OCI-LY7 (cell line): ENCODE measurements at regions of chr11 and their contacts with region 1.

Region 1: GRCh38 chr11:60455531-60456042 is at the start of gene MS4A1:
- DNase-seq: peak; percentile 100
- H3K4me3 ChIP-seq: peak within 1 kb of the TSS; percentile 84
- H3K27ac ChIP-seq: peak within 1 kb of the TSS; percentile 100
- H3K4me1 ChIP-seq: peaks cover 49% of the 10 kb centered on the region
- CTCF ChIP-seq: no peak
- total RNA-seq, gene MS4A1: 435 and 488 TPM in 2 replicates

Region 2: GRCh38 chr11:60251485-60252212 is 203.9 kb before region 1 on chr11:
- CTCF ChIA-PET with region 1: no interaction called
- POLR2A ChIA-PET with region 1: no interaction called
- intact Hi-C with region 1: no loop called
- DNase-seq: no peak
- H3K4me3 ChIP-seq: no peak overlapping the region
- H3K27ac ChIP-seq: no peak overlapping the region
- H3K4me1 ChIP-seq: no peaks in the 10 kb centered on the region
- CTCF ChIP-seq: peak; percentile 39; the same call in 1 of the 2 replicates

Region 3: GRCh38 chr11:60363542-60364510 is 91.8 kb before region 1 on chr11:
- CTCF ChIA-PET with region 1: interaction called, 26 read pairs
- POLR2A ChIA-PET with region 1: interaction called, 30 read pairs
- intact Hi-C with region 1: loop called (anchors 1 kb)
- DNase-seq: peak; percentile 91
- H3K4me3 ChIP-seq: peak overlapping the region; percentile 25
- H3K27ac ChIP-seq: peak overlapping the region; percentile 43
- H3K4me1 ChIP-seq: peaks cover 51% of the 10 kb centered on the region
- CTCF ChIP-seq: peak; percentile 96

Region 4: GRCh38 chr11:60378354-60378753 is 77.2 kb before region 1 on chr11 and contains the start of gene MS4A7:
- CTCF ChIA-PET with region 1: no interaction called
- POLR2A ChIA-PET with region 1: interaction called, 12 read pairs
- intact Hi-C with region 1: loop called (anchors 1 kb)
- DNase-seq: peak; percentile 89
- H3K4me3 ChIP-seq: peak within 1 kb of the TSS; percentile 52
- H3K27ac ChIP-seq: peak within 1 kb of the TSS; percentile 77
- H3K4me1 ChIP-seq: peaks cover 34% of the 10 kb centered on the region
- CTCF ChIP-seq: no peak
- total RNA-seq, gene MS4A7: 0.26 and 0.54 TPM in 2 replicates

Region 5: DNA sequence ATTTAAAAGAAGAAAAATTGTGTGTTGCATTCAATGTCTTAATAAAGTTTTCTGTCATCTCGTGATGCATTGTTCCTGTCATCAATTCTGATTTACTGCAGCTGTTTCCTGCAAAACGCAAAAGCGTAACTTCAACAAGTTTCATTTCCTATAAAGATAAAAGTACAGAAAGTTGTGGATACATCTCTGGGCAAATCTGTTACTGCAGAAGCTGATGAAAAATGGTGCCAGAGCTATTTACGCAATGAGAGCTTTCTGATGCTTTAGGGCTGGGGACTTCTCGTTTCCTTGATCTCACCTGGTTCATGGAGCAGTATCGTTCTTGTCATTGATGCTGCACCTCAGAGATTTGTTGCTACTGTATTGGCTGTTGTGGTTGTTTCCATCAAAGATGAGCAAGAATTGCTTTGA is 21.5 kb after region 1 on chr11:
- CTCF ChIA-PET with region 1: interaction called, 8 read pairs
- POLR2A ChIA-PET with region 1: interaction called, 123 read pairs
- intact Hi-C with region 1: loop called (anchors 1 kb)
- DNase-seq: peak; percentile 94
- H3K4me3 ChIP-seq: peak overlapping the region; percentile 46
- H3K27ac ChIP-seq: peak overlapping the region; percentile 95
- H3K4me1 ChIP-seq: peaks cover 59% of the 10 kb centered on the region
- CTCF ChIP-seq: no peak

Region 6: DNA sequence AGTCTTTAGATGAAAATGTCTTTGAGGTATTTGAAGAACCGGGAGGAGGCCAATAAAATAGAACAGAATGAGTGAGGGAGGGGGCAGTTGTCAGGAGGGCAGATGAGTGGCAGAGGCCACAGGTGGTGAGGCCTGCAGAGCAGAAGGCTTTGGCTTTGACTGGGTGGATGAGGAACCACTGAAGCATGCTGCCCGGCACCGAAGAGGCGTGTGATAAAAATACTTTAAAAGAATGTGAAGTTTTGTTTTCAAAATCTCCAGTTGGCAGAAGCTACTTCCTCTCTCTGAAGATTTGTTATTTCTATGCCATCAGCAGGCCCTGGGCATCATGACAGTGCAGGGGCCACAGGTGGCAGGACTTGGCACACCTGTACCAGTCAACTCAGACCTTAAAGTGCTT is 43.3 kb after region 1 on chr11:
- CTCF ChIA-PET with region 1: interaction called, 3 read pairs
- POLR2A ChIA-PET with region 1: interaction called, 11 read pairs
- intact Hi-C with region 1: loop called (anchors 1 kb)
- DNase-seq: peak; percentile 95
- H3K4me3 ChIP-seq: peak overlapping the region; percentile 47
- H3K27ac ChIP-seq: peak overlapping the region; percentile 96
- H3K4me1 ChIP-seq: peaks cover 49% of the 10 kb centered on the region
- CTCF ChIP-seq: no peak

Region 7: DNA sequence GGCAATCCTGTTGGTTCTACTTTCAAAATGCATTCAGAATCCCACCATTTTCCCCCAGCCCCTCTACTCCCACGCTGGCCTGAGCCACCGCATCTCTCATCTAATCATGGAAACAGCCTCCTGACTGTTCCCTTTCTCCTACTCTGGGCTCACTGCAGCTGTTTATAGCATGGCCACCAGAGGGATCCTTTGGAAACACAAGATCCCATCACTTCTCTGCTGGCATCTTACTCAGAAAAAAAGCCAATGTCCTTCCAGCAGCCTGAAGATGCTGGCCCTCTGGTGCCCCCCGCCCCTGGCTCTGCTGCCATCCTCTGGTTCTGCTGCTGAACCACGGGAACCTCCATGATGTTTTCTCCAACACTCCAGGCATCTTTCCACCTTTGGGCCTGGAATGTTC is 254.9 kb after region 1 on chr11:
- CTCF ChIA-PET with region 1: no interaction called
- POLR2A ChIA-PET with region 1: no interaction called
- intact Hi-C with region 1: no loop called
- DNase-seq: no peak
- H3K4me3 ChIP-seq: no peak overlapping the region
- H3K27ac ChIP-seq: no peak overlapping the region
- H3K4me1 ChIP-seq: no peaks in the 10 kb centered on the region
- CTCF ChIP-seq: no peak